Activated CD8-positive, alpha-beta T cell treated with anti-CD3 and anti-CD28 coated beads, Interleukin-2, amount 10 ng/mL, durations not matched to agents 7 days and 5 days (primary cell): ENCODE measurements at regions of chr2 and their contacts with region 1.

Region 1: DNA sequence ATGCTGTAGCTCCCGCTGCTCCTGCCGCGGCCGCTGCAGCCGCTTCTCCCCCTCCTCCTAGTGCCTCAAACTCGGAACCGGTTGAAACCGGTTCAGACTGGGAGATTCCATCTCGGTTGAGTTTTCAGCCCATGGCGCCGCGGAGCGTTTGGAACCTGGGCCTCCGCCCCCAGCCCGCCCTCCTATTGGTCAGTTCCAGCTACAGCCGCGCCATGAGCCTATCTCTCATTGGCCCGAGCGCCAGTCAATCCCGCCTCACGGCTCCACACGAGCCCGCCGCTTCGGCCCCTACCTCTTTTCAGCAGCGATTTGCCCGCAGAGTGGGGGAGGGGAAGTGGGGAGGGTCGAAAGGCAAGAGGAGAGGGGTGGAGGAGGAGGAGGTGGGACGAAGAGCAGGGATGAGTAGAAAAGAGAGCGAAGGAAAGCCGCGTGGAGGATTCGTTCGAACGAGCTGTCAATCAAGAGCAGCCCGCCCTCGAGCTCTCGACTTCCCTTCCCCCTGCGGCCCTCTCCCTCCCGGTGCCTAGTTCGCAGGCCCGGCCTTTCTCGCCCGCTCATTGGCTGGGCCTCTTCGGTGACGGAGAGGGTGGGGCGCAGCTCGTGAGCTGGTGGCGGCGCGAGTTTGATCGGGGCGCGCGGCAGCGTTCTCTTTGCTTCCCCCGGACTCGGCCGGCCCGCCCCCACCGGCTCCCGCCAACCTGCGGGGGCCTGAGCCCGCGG is at the start of gene XPO1:
- DNase-seq: peak; percentile 99
- ATAC-seq: peak; percentile 87
- H3K4me3 Mint-ChIP-seq: peak within 1 kb of the TSS; percentile 89
- H3K27ac Mint-ChIP-seq: peak within 1 kb of the TSS; percentile 94
- H3K4me1 Mint-ChIP-seq: peaks cover 22% of the 10 kb centered on the region
- H3K27me3 Mint-ChIP-seq: no peaks in the 10 kb centered on the region
- total RNA-seq, gene XPO1: 208 to 226 TPM

Region 2: DNA sequence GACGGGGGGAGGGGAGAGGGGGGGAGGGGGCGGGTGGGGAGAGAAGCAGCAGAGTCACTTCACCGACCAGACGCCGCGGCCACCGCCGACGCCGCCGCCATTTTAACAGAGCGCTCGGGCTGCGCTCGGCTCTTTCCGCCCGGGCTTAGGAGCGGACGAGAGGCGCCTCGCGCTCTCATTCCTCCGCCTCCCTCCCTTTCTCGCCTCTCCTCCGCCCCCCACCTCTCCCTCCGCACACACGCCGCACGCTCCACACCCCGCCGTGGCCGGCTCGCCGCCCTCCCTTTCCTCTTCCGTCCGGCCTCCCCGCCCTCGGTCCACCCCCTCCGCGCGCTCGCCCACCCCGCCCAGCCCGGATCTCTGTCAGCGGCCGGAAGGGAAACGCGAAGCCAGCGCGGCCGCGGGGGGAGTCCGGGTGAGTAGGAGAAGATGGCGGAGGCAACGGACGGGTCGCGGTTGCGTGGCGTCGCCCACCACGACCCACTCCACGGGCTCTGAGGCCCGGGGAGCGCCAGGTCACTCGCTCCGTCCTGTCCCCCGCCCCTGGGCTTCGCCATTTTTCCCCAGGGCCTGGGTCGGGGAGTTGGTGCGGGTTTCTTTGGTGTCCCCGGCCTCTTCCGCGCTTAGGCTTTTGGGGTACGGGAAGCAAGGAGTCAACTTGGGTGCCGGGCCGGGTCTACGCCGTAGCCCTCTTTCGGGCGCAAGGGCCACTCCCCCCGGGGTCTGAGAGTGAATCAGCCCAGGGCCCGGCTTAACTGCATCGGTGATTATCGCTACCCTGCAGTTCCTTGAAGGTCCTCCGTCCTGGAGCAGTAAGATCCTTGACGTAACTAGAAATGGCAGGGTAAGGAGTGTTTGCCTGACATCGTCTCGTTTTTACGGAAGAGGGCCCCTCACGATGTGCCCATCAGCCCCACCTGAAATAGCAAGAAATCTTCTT is 67.1 kb before region 1 on chr2 and contains the start of gene USP34:
- CTCF ChIA-PET with region 1: no interaction called
- POLR2A ChIA-PET with region 1: interaction called, 11 read pairs
- DNase-seq: peak; percentile 97
- ATAC-seq: peak; percentile 94
- H3K4me3 Mint-ChIP-seq: peak within 1 kb of the TSS; percentile 92
- H3K27ac Mint-ChIP-seq: peak within 1 kb of the TSS; percentile 94
- H3K4me1 Mint-ChIP-seq: peaks cover 32% of the 10 kb centered on the region
- H3K27me3 Mint-ChIP-seq: no peaks in the 10 kb centered on the region
- total RNA-seq, gene USP34: 80.4 to 84.7 TPM